HEK293 (cell line): ENCODE measurements at regions of chr5 and their contacts with region 1.

Region 1: GRCh38 chr5:57173185-57174127 is at the start of gene GPBP1:
- H3K4me3 ChIP-seq: peak within 1 kb of the TSS; percentile 95
- H3K27ac ChIP-seq: peak within 1 kb of the TSS; percentile 100
- H3K4me1 ChIP-seq: no peaks in the 10 kb centered on the region
- CTCF ChIP-seq: peak; percentile 85

Region 2: DNA sequence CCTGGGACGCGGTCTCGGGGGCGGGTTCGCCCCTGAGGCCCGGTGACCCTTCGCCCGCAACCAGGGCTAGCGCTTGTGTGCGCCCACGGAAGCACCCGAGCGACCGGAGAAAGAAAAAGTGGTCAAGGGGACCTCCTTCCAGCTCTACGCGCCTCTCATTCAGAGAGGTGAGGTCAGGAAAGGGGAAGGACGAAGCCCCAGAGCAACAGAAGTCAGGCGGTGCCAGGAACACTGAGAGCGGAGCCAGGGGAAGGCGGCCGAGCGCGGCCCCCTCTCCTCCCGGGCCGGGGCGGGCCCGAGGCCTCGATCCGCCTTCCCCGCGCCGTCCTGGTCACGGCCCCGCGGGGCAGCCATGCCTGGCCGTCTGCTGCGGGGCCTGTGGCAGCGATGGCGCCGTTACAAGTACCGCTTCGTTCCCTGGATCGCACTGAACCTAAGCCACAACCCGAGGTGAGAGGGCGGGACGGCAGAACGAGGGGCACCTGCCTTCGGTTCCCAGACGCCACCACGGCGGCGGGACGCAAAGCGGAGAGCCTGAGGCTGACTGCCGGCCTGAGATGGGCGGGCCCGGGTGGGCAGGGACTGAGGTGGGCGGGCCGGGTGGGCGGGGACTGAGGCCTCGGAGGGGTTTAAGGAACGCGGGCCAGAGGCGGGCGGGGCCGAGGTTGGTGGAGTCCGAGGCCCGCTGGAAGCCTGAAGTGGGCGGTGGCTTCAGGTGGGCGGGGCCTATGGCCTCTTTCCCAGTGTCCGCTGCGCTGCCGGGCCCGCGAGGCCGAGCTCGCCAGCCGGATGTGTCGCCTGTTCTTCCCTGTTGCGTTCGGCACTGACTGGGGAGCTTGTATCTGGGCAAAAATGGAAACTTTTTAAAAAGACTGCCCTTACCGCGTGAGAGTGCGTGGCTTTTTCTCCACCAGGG is 263.9 kb before region 1 on chr5 and contains the start of gene SETD9:
- CTCF ChIA-PET with region 1: no interaction called
- POLR2A ChIA-PET with region 1: interaction called, 25 read pairs
- H3K4me3 ChIP-seq: peak within 1 kb of the TSS; percentile 88
- H3K27ac ChIP-seq: peak within 1 kb of the TSS; percentile 92
- H3K4me1 ChIP-seq: no peaks in the 10 kb centered on the region
- CTCF ChIP-seq: no peak

Region 3: DNA sequence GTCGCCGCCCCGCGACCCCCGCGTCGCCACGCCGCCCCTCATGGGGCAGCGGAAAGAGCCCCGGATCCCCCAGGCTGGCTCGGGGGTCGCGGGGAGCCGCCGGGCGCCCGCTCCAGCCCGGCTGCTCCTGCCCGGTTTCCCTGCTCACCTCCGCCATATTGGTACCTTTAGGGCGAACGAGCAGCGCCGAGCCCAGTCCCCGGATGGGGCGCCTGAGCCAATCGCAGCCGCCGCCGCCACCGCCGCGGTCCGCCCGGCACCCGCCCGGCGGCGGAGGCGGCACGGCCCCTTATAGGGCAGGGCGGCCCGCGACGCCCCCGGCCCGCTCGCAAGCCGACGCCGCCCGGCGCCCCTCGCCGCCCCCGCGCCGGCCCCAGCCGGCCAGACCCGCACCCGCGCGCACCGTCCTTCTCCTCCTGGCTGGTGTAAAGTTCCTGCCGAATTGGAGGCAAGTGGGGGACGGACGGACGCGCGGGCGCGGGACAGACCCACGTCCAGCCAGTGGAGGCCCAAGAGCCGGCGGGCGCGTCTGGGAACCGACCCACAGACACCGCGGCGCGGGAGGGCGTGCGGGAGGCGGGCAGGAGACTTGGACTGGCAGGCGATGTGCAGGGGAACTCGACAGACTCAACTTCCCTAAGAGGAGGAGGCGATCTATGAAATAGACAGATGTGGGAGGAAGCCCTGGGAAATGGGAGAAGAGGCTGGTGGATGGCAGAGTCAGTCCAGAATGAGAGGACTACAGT is 221.3 kb before region 1 on chr5 and contains the start of gene MIER3:
- CTCF ChIA-PET with region 1: no interaction called
- POLR2A ChIA-PET with region 1: interaction called, 16 read pairs
- H3K4me3 ChIP-seq: peak within 1 kb of the TSS; percentile 69
- H3K27ac ChIP-seq: peak within 1 kb of the TSS; percentile 89
- H3K4me1 ChIP-seq: 0 out of 2 replicates have a peak, but pooled peaks cover 5% of the 10 kb centered on the region
- CTCF ChIP-seq: peak; percentile 43

Region 4: DNA sequence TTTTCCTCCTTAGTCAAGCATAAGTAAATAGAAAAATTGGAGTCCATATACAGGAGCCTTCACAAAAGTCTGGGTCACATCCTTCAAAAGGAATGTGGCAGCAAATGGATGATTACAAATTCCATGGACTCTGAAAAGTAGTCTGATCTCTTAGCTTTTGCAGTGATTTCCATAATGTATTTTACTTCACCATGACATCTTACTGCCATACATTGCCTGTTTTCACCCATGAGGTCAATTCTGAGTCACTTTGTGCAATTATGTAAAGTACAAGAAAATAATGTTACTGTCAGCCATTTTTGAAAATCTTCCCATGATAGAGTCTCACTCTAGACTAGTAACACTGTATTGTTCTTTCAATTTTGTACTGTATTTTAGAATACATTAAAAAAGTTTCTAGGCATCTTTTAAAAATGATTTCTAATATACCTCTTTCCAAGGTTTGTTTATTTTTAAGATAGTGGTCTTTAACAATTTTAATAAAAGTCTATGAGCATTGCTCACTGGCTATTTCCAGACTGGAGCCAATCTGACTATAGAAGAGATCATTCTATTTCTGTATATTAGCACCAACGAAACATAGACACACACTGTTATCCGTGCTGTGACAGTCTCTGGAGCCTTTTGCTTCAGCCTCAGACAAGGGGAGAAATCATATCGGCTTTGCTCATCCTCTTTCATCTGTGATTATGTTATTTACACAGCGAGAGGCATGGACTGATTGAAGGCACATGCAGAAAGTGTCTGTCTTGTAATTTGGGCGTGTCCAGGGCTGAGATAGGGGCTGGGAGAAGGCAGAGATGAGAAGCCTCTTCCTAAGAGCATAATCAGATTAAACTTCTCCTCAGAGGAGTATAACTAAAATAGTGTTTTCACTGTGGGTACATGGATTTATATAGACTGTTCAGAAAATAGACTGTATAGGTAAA is 332.1 kb after region 1 on chr5:
- CTCF ChIA-PET with region 1: no interaction called
- POLR2A ChIA-PET with region 1: no interaction called
- H3K4me3 ChIP-seq: no peak overlapping the region
- H3K27ac ChIP-seq: no peak overlapping the region
- H3K4me1 ChIP-seq: 0 out of 2 replicates have a peak, but pooled peaks cover 3% of the 10 kb centered on the region
- CTCF ChIP-seq: no peak